ENCODE measurements at regions of chr19 and their contacts with region 1.

Region 1: DNA sequence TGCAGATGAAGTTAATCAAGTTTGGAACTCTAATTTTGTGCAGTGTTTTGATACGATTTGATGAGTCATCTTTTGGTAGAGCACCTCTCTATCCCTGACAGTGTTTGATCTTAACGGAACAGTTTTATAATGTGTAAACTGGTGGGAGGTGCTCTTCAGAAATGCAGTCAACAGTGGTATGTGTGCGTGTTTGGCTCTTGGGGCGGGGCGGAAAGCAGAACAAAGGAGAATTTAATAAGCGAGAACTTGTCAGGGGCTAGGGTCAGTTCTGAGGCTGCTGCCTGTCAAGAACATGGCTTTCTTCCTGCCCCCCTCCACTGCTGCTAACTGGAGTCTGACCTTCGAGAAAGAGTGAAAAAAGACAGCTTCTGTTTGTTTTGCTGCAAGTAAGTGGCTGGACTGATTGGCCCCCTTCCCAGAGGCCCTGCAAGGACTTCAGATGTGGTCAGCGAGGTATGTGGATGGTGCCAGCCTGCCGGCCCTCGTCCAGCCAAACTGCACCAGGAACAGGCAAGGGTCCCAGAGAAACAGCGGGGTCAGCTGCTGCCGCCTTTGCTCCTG is 40.8 kb downstream of the BBC3 start:
- DNase-seq: peak; percentile 27
- H3K4me3 Mint-ChIP-seq: peak overlapping the region; percentile 52
- H3K27ac Mint-ChIP-seq: peak overlapping the region; percentile 93
- H3K4me1 Mint-ChIP-seq: peaks cover 56% of the 10 kb centered on the region
- H3K27me3 Mint-ChIP-seq: no peaks in the 10 kb centered on the region

Region 2: DNA sequence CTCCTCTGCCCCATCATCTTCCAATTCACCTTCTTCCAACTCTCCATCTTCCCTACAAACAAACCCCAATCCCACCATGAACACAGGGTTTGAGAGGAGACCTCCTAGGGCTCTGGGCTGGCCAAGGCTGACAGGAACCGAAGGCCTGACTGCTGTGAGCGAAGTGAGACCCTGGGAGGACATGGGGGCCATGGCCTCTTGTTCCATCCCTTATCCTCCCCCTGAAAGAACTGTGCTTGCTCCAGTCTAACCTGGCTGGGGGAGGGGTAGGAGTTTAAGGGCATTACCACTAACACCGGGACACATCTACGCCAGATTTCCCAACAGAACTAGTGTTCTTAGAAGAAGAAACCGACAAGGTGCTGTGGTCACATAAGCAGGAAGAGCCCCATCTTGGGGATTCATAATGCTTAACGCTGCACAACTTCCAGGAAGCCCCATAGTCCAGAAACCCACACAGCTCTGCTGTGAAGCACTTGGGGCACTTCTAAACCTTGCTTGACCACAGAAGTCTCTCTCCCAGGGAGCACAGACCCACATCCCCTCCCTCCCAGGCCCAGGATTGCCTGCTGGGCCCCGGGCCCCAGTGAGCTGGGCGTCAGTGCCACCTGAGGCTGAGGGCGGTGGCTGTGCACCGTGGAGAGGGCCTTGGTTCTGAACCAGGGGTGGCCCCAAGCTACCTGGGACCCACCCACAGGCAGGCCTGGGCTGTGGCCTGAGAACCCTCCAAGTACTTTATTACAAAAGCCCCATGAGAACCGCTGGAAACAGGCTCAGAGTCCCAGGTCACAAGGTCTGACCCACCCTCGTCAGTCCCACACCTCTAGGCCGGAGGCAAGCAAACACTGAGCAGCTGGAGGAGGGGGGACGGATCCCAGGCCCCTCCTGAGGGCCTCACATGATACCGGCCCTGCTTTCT is 95.4 kb before region 1 on chr19:
- intact Hi-C with region 1: loop called (anchors 2 kb)
- DNase-seq: peak; percentile 60
- H3K4me3 Mint-ChIP-seq: peak overlapping the region; percentile 93
- H3K27ac Mint-ChIP-seq: peak overlapping the region; percentile 99
- H3K4me1 Mint-ChIP-seq: peaks cover 72% of the 10 kb centered on the region
- H3K27me3 Mint-ChIP-seq: no peaks in the 10 kb centered on the region

Region 3: DNA sequence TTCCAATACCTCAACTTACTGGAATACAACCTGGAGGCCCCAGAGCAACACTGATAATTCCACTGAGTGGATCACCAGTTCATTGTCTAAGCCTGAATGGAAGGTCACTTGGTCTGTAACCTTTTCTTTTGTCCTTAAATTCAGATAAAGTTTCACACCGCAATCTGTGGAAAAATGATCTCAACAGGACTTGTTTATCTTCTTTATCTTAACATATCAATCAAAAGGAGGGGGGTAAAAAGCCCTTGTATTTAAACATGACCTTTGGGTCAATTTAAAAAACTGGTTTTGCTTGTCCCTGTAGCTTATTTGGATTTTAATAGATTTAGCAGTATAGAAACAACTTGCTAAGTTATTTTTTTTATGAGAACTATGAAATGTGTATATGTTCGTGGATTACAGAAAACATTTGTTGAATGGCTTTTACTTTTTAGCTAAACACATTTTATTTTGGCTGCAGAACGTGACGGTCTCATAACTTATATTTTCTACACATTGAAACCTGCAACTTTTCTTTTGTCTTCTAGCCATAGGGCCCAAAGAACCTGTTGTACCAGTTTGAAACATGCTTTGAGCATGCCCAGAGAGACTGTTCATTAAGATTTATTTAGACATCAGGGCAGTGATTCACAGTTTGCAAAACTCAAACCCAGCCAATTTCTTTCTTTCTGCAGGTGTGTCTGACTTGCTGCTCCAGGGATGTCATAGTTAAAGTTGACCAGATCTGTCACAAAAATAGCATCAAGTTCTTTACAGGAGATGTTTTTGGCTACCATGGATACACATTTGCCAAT is 37.8 kb before region 1 on chr19:
- intact Hi-C with region 1: loop called (anchors 1 kb)
- DNase-seq: no peak
- H3K4me3 Mint-ChIP-seq: no peak overlapping the region
- H3K27ac Mint-ChIP-seq: peak overlapping the region; percentile 34
- H3K4me1 Mint-ChIP-seq: peaks cover 50% of the 10 kb centered on the region
- H3K27me3 Mint-ChIP-seq: no peaks in the 10 kb centered on the region

Region 4: GRCh38 chr19:47176627-47177090 is 13.6 kb before region 1 on chr19:
- intact Hi-C with region 1: loop called (anchors 1 kb)
- DNase-seq: peak; percentile 31
- H3K4me3 Mint-ChIP-seq: peak overlapping the region; percentile 68
- H3K27ac Mint-ChIP-seq: peak overlapping the region; percentile 90
- H3K4me1 Mint-ChIP-seq: peaks cover 53% of the 10 kb centered on the region
- H3K27me3 Mint-ChIP-seq: no peaks in the 10 kb centered on the region

Region 5: DNA sequence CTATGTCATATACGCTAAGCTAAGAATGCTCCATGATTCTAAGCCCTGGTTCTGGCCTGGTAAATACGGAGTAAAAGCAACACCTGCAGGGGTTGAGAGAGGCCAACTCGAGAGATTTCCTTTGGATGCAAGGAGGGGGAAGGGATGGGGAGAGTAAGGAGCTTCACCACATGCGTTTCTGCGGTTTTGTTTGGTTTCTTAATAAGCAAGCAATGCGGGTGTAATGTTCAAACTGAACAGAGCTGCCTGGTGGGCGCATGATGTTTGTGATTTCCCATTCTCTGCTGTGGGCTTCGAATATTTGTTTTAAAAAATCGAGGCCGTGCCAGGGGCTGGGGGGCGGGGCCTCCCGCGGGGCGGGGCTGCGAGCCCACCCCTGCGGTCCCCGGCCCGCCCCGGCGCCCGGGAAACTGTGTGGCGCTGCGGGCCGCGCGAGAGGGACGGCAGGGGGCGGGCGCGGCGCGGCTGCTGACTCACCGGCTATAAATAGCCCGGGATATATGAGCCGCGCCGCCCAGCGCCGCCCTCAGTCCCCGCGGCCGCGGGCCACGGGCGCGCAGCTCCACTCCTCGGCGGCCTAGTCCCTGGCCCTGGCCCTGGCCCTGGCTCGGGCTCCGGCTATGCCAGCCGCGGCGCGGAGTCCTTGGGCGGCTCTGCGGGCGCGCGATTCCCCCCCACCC is 35.6 kb after region 1 on chr19:
- intact Hi-C with region 1: loop called (anchors 1 kb)
- DNase-seq: peak; percentile 87
- H3K4me3 Mint-ChIP-seq: peak overlapping the region; percentile 38
- H3K27ac Mint-ChIP-seq: peak overlapping the region; percentile 82
- H3K4me1 Mint-ChIP-seq: peaks cover 6% of the 10 kb centered on the region
- H3K27me3 Mint-ChIP-seq: no peaks in the 10 kb centered on the region